ENCODE measurements at regions of chr17 and their contacts with region 1.

Region 1: DNA sequence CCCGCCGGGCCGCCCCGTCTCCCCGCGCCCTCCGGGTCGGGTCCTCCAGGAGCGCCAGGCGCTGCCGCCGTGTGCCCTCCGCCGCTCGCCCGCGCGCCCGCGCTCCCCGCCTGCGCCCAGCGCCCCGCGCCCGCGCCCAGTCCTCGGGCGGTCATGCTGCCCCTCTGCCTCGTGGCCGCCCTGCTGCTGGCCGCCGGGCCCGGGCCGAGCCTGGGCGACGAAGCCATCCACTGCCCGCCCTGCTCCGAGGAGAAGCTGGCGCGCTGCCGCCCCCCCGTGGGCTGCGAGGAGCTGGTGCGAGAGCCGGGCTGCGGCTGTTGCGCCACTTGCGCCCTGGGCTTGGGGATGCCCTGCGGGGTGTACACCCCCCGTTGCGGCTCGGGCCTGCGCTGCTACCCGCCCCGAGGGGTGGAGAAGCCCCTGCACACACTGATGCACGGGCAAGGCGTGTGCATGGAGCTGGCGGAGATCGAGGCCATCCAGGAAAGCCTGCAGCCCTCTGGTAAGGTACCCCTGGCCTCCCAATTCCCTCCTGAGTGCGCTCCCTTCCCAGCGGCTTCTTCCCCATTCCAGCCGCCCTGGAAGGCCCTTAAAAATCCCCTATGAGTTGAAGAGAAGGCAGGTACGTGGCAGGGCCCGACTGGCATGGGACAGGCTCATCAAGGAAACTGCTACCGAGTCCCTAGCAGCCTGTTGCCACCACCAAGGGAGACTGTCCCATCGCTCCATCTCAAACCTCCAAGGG is 505 bp downstream of the IGFBP4 start:
- DNase-seq: peak; percentile 81 to 88 (median 84)
- H3K4me3 ChIP-seq: peak overlapping the region; percentile 74
- H3K27ac ChIP-seq: peak overlapping the region; percentile 89 to 98
- H3K4me1 ChIP-seq: peaks cover 24% of the 10 kb centered on the region
- H3K27me3 ChIP-seq: no peaks in the 10 kb centered on the region
- CTCF ChIP-seq: peak in 1 of 3 donors; percentile 47
- EP300 ChIP-seq: no peak
- POLR2A ChIP-seq: no peak

Region 2: DNA sequence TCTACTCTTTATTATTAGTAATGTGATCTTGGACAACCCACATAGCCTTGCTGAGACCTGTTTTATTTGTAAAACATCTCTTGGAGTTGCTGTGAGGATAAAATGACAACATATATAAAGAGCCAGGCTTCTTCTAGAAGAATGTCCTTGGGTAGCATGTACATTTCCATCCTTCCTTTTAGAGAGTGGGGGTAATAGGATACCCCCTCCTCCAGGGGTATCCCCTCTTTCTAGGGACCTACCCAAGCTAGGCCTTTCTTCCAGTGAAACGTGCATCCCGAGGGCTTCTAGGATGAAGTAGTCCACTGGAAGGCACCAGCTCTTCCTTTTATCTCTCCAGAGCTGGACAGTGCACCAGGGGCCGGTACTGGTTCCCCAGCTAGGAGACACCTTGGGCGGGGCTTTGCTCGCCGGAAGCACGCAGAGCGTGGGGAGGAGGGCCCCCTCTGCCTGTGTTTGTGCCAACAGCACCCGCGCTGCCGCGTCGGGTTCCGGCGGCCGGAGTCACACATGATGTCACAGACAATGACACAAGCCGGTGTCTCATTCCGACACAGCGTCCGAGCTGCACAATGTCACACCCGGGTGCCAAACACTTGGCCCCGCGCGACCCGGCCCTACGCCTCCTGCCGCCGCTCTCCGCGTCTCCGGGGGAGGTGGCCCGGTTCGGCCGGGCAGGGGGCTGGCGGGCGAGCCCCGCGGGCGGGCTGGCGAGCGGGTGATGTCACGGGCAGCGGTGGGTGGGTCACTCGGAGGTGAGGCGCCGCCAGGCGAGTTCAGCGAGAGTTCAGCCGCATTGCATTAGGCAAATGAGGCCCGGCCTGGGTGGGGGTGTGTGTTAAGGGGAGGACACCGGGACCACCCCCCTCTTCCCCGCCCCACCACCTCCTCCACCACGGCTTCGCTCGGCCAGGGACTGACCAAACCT is 102.6 kb before region 1 on chr17:
- intact Hi-C with region 1: no loop called
- DNase-seq: peak; percentile 87 to 92 (median 87)
- H3K4me3 ChIP-seq: peak overlapping the region; percentile 68
- H3K27ac ChIP-seq: peak overlapping the region; percentile 84 to 95
- H3K4me1 ChIP-seq: peaks cover 16% of the 10 kb centered on the region
- H3K27me3 ChIP-seq: no peaks in the 10 kb centered on the region
- CTCF ChIP-seq: peak in 1 of 3 donors; percentile 23
- EP300 ChIP-seq: peak; percentile 61
- POLR2A ChIP-seq: peak; percentile 64

Region 3: GRCh38 chr17:40480501-40481003 is 36.8 kb after region 1 on chr17:
- intact Hi-C with region 1: loop called (anchors 2 to 5 kb)
- DNase-seq: peak in 1 of 5 donors; percentile 36
- H3K4me3 ChIP-seq: no peak overlapping the region
- H3K27ac ChIP-seq: no peak overlapping the region
- H3K4me1 ChIP-seq: peaks cover 8% of the 10 kb centered on the region
- H3K27me3 ChIP-seq: no peaks in the 10 kb centered on the region
- CTCF ChIP-seq: no peak
- EP300 ChIP-seq: no peak
- POLR2A ChIP-seq: no peak

Region 4: GRCh38 chr17:40531051-40531991 is 87.6 kb after region 1 on chr17:
- intact Hi-C with region 1: loop called (anchors 2 to 5 kb)
- DNase-seq: peak in 3 of 5 donors; percentile 27 to 45 (median 38)
- H3K4me3 ChIP-seq: no peak overlapping the region
- H3K27ac ChIP-seq: no peak overlapping the region
- H3K4me1 ChIP-seq: peaks cover 13% of the 10 kb centered on the region
- H3K27me3 ChIP-seq: no peaks in the 10 kb centered on the region
- CTCF ChIP-seq: no peak
- EP300 ChIP-seq: no peak
- POLR2A ChIP-seq: no peak

Region 5: GRCh38 chr17:40536295-40537171 is 92.8 kb after region 1 on chr17:
- intact Hi-C with region 1: loop called (anchors 2 to 5 kb)
- DNase-seq: peak; percentile 43 to 63 (median 59)
- H3K4me3 ChIP-seq: no peak overlapping the region
- H3K27ac ChIP-seq: peak overlapping the region; percentile 58 to 59
- H3K4me1 ChIP-seq: peaks cover 31% of the 10 kb centered on the region
- H3K27me3 ChIP-seq: no peaks in the 10 kb centered on the region
- CTCF ChIP-seq: no peak
- EP300 ChIP-seq: peak; percentile 33
- POLR2A ChIP-seq: no peak

Region 6: DNA sequence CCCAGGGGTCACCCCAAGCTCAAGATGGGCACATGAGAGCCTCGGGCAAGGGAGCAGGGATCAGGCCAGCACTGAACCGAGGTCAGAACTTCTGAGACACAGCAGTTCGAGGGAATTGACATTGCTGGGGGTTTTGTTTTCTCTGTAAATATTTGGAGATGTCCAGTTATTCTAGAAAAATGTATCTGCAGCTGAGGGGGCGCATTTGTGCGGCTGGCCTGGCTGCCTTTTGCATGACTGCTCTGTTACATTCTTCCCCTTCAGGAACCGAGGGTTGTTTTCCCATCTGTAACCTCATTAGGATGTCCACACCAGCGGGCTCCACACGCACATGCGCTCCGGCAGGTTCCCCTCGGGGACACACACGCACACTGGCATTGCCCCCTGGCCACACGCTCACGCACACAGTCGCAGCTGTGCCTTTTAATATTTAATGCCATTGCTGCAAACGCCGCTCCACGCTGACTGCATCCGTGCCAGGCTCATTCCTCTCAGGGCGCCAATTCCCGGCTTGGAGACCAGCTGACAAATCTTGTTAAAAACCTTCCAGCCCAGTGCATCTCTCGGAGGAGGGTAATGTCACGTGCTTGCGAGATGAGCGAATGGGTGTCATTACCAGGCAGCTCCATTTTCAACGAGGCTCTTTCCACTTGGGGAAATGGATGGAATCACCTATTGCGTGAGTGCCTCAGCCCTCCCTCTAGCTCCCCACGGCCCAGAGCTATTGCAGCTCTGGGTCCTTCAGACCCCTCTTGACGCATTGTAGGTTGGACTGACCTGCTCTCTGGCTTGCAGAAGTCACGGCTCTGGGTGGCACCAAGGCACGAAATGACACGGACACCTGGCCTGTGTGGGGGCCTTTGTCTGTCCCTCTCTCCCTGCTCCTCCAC is 108.4 kb after region 1 on chr17:
- intact Hi-C with region 1: loop called in 3 of 4 experiments (anchors 5 kb)
- DNase-seq: peak in 4 of 5 donors; percentile 41 to 65 (median 58)
- H3K4me3 ChIP-seq: no peak overlapping the region
- H3K27ac ChIP-seq: peak overlapping the region; percentile 73 to 82
- H3K4me1 ChIP-seq: peaks cover 59% of the 10 kb centered on the region
- H3K27me3 ChIP-seq: no peaks in the 10 kb centered on the region
- CTCF ChIP-seq: no peak
- EP300 ChIP-seq: no peak
- POLR2A ChIP-seq: no peak

Region 7: DNA sequence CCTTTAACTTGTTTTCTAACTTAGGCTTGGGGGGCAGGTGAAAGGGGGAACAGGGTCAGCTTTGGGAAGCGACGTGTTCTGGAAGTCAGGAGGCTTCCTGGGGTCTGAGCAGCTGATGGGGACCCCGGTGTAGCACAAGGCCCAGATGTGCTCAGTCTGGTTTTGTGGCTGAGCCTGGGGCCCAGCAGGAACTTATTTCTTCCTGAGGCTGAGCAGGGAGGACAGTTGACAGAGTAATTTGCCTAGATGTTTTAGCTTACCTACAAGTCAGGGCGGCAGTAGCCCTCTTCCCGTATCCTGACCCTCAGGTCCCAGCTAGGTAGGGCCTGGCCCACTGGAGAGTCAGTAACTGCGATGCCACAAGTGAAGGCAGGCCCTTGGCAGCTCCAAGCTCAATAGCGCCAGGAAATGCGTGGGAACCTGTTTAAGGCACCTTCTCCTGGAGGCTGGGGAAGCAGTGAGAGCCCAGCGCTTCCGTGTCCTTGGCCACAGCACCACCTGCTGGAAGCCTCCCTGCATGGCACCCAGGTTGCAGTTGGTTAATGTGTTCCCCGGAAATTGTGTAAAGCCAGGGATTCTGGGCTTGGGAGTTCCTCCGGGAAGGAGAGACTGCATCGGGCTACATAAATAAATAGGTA is 116.3 kb after region 1 on chr17:
- intact Hi-C with region 1: loop called in 3 of 4 experiments (anchors 2 to 5 kb)
- DNase-seq: peak; percentile 89 to 96 (median 96)
- H3K4me3 ChIP-seq: no peak overlapping the region
- H3K27ac ChIP-seq: peak overlapping the region; percentile 46 to 63
- H3K4me1 ChIP-seq: peaks cover 29% of the 10 kb centered on the region
- H3K27me3 ChIP-seq: no peaks in the 10 kb centered on the region
- CTCF ChIP-seq: peak; percentile 93 to 98 (median 97)
- EP300 ChIP-seq: no peak
- POLR2A ChIP-seq: peak; percentile 26

Measured in ovary (tissue), 10 donors.